Head of caudate nucleus (tissue), 42 donors: ENCODE measurements at regions of chr5 and their contacts with region 1.

Region 1: DNA sequence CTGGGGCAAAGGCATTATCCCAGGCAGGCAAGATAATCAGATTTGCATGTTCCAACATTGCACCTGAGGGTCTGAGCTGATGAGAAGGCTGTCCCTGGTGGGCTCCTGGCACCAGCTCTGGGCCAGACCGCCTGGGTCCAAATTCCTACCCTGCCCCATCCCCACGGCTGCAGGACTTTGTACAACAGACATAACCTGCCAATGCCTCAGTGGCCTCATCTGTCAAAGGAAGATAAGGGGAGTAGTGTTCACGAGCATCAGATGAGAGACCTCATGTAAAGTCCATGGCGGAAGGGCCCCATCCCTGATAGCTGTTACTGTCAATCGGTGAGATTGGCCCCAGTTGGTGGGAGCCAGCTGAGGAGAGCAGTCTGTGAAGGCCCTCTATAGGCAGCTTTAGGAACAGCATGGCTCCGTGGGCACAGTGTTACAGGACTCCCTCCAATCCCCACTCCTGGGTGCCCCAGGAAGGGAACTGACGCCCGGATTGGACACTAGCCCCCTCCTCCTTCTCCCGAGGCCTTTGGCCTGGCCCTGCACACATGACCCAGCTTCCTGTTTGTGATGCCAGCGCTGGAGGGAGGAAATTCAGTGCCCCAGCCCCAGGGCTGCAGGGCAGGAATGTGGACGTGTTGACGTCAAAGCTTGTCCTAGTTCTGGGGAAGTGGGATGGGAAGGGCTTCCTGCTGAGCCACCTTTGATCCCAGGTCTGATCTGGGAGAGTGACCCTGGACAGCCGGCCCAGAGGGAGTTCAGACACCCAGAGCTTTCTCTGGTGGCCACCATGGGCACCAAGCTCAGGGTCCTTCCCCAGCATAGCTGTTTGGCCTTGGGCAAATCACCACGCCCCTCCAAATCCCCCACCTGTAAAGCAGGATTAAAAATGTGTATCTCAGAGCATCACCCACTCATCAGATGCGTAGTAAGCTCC is 56.2 kb downstream of the DUSP1 start:
- DNase-seq: peak; percentile 54 to 89 (median 78)

Region 2: GRCh38 chr5:172932313-172933017 is 217.7 kb after region 1 on chr5:
- intact Hi-C with region 1: loop called (anchors 2 kb)
- DNase-seq: peak; percentile 40 to 87 (median 74)

Region 3: GRCh38 chr5:173283318-173284288 is 568.8 kb after region 1 on chr5:
- intact Hi-C with region 1: loop called (anchors 10 kb)
- DNase-seq: peak; percentile 20 to 86 (median 71)